Mucosa of descending colon (tissue), 3 donors: ENCODE measurements at regions of chr19 and their contacts with region 1.

Region 1: DNA sequence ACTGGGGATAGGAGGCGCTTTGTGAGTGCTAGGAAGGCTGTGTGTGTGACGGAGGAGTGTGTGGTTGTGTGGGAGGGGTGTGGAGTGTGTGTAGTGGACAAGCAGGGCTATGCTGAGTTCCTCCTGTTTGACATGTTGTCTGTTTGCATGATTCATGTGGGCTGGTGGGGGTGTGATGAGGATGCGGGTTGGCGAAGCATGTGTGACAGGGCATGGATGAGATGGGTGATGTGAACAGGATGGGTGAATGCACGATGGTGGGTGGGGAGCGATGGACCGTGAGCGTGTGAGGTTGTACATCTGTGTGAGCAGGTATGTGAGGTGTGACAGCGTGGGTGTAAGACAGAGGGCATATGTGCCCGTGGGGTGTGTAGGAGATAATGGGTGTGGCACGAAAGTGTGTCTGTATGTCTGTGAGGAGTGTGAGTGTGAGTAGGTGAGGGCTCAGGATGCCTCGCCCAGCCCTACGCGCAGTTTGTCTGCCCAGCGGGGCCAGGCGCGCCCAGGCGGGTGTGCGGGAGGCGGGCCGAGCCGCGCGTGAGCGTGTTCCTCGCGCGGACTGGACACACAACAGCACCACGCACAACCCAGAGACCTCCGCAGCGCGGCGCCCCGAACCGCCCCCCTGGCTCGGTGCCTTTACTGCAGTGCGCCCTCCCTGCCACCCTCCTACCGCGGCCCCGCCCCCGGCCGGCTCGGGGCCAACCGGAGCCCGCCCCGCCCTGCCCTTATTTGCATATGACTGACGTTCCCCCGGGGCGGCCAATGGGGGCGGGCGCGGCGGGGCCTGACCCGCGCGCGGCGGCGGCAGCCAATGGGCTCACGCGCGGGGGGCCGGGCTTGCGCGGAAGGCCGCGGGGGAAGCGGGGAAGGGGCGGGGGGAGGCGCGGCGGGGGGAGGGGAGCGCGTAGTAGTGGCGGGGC is 14.4 kb downstream of the CIC start:
- DNase-seq: peak; percentile 97 to 98 (median 97)
- ATAC-seq: peak; percentile 82
- H3K4me3 ChIP-seq: peak overlapping the region; percentile 46
- H3K4me1 ChIP-seq: peaks cover 52% of the 10 kb centered on the region
- CTCF ChIP-seq: no peak

Region 2: DNA sequence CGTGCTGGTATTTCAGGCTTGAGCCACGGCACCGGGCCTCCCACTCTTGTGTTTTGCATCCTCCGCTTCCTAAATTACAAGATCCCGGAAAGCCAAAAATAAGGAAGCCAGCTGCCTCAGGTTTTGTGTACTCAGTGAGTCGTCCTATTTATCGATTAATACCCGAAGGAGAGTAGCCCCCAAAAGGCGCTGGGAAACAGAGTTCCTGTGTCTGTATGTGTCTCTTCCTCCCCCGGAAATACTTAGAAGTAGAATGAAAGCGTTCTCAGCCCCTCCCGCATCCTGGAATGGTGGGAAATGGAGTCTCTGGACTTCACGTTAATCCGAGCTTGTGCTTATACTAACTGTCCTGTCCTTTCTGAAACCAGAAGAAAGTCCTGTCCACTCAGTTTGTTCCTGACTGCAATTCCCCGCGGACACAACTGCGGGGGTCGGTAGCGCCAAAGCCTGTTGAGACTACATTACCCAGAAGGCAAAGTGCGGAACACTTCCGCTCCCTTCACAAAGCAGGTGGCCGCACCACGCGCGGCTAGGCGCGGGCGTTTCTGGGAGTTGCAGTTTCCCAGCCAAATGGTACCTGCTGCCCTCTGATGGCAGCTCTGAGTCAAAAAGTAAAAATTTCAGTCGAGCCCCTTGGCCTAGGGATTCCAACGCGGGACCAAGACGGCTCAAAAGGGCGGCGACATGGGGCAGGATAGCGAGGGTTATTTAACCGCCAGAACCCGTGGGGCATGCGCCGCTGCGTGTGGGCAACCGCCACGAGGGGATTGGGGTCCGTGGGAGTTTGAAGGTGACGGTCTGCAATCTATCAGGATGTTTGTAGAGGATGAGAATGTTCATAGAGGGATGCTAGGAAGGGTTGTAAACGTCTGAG is 38.8 kb before region 1 on chr19:
- intact Hi-C with region 1: loop called in 1 of 2 experiments (anchors 5 kb)
- DNase-seq: peak; percentile 94 to 95 (median 94)
- ATAC-seq: peak; percentile 61
- H3K4me3 ChIP-seq: peak overlapping the region; percentile 77
- H3K4me1 ChIP-seq: peaks cover 23% of the 10 kb centered on the region
- CTCF ChIP-seq: peak; percentile 54